ENCODE measurements at regions of chr6 and their contacts with region 1.

Region 1: DNA sequence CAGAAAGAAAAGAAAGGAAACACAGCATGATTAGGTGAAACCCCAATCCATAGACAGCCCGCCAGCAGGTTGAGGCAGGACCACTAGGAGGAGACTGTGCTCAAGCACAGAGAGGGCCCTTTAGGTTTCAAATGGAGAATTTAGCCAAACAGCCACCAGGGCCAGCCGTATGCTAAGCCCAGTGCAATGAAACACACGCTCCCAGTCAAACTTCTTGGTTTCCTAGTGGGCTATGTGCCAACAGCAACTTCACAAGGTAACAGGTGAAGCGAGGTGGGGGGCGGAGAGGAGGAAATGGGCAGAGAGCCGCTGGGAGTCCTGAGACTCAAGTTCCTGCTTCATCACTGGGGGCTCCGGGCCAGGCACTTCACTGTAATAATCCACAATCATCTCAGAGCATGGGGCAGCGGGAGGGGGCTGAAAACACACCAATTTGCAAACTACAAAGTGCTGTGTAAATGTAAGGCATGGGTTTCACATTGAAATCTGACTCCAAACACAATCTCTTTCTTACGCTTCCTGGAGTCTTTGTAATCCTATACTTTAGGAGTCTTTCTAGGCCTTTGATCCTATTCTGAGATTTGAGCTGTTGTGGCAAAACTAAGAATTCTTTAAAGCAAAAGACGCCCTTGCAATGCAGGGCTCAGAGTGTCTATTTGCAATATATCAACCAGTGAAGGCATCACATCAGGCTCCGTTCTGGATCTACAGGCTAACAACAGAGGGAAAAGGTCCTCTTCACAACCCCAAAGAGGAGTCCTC is 117.3 kb downstream of the OPRM1 start:
- DNase-seq: peak in 2 of 4 donors; percentile 59 to 78
- ATAC-seq: peak; percentile 96
- H3K4me3 ChIP-seq: no peak overlapping the region
- H3K27ac ChIP-seq: peak overlapping the region in 1 of 2 donors; percentile 63
- H3K4me1 ChIP-seq: peaks cover 8 to 34% of the 10 kb centered on the region in 2 donors
- H3K27me3 ChIP-seq: no peaks in the 10 kb centered on the region
- CTCF ChIP-seq: peak; percentile 61 to 67

Region 2: DNA sequence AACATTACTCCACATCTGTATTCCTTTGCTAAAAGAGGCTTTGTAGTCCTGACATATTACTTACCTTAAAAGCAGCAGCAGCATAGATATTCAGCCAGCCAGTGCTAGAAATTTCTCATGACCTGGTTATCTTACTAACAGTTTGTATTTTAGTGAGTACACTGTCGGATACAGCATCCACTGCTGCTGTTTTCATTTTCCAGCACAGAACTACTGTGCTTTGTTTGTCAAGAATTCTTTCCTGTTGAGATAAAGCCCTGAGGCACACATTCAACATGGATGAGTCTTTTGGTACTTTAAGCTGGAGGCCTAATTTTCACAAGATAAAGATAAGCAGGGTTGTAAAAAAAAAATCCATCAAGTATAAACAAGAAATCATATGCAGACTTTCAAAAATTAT is 428.4 kb before region 1 on chr6:
- intact Hi-C with region 1: no loop called
- DNase-seq: no peak
- ATAC-seq: no peak
- H3K4me3 ChIP-seq: no peak overlapping the region
- H3K27ac ChIP-seq: no peak overlapping the region
- H3K4me1 ChIP-seq: no peaks in the 10 kb centered on the region
- H3K27me3 ChIP-seq: no peaks in the 10 kb centered on the region
- CTCF ChIP-seq: no peak

Region 3: GRCh38 chr6:154276810-154277628 is 120.7 kb after region 1 on chr6:
- intact Hi-C with region 1: loop called in 1 of 2 experiments (anchors 5 kb)
- DNase-seq: peak in 1 of 4 donors; percentile 49
- ATAC-seq: peak; percentile 89
- H3K4me3 ChIP-seq: no peak overlapping the region
- H3K27ac ChIP-seq: no peak overlapping the region
- H3K4me1 ChIP-seq: peaks cover 0 to 16% of the 10 kb centered on the region in 2 donors
- H3K27me3 ChIP-seq: no peaks in the 10 kb centered on the region
- CTCF ChIP-seq: peak; percentile 52 to 56

Measured in left lung (tissue), 14 donors.